ENCODE measurements at regions of chr15 and their contacts with region 1.

Region 1: GRCh38 chr15:71386448-71387236 is 271.4 kb downstream of the THSD4 start:
- DNase-seq: peak; percentile 33
- H3K4me3 ChIP-seq: no peak overlapping the region
- H3K27ac ChIP-seq: peak overlapping the region; percentile 64 to 68
- H3K4me1 ChIP-seq: peaks cover 8% of the 10 kb centered on the region
- H3K27me3 ChIP-seq: no peaks in the 10 kb centered on the region
- CTCF ChIP-seq: peak in 3 of 4 experiments; percentile 70 to 82 (median 80)
- POLR2A ChIP-seq: no peak

Region 2: DNA sequence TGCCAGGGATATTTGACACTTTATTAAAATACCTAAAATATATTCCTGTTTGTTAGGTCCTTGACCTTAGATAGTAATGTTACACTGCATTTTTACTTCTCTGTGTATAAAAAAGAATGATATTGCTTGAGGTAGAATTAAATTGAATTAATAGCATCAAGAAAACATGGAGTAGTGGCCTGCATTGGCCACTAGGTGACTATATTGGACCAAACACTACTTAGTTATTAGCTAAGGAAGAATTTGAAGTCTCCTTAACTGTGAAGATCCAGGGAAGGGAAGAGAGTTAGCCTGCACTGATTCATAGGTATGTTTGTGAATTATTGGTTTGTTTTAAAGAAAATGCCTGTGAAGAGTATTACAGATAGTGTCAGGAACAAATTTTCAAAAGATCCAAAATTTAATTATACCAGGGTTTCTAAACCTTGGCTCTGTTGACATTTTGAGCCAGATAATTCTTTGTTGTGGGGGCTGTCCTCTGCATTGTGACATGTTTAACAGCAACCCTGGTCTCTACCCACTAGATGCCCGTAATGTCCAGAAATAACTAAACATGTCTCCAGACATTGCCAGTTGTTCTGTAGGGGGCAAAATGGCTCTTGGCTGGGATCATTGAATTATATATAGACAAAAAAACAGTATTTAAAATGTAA is 375.0 kb before region 1 on chr15:
- intact Hi-C with region 1: loop called (anchors 10 kb)
- DNase-seq: peak; percentile 46
- H3K4me3 ChIP-seq: no peak overlapping the region
- H3K27ac ChIP-seq: no peak overlapping the region
- H3K4me1 ChIP-seq: no peaks in the 10 kb centered on the region
- H3K27me3 ChIP-seq: no peaks in the 10 kb centered on the region
- CTCF ChIP-seq: peak; percentile 54 to 96 (median 86)
- POLR2A ChIP-seq: no peak

Region 3: DNA sequence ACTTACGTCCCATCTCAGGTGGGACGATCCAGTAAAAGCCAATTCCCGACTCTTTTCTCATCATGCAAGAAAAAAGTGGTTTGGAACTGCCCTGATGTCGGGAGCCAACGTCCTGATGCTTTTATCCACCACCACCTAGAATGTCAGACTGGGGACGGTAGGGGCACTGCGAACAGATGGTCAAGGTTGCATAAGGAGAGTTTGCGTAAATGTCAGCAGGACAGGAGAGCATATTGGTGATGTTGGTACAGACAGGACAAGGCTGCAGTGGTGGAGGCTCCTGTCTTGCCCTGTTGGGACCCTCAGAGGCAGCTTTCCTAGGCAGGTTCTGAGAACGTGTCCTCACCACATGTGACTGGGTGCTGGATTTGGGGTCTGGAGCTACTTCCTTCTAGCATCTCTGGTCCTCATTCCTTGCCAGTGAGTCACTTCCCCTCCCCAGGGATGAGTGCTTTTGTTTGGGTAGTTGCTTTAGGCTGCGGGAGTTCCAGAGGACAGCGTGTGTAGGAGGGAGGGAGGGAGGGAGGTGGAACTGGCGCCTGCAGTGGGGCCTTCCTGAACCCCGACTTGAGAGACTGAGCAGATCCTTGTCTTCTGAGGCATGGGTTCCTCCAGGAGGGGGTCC is 250.4 kb before region 1 on chr15:
- intact Hi-C with region 1: no loop called
- DNase-seq: no peak
- H3K4me3 ChIP-seq: no peak overlapping the region
- H3K27ac ChIP-seq: peak overlapping the region in 1 of 2 donors; percentile 69
- H3K4me1 ChIP-seq: no peaks in the 10 kb centered on the region
- H3K27me3 ChIP-seq: no peaks in the 10 kb centered on the region
- CTCF ChIP-seq: no peak
- POLR2A ChIP-seq: no peak

Region 4: DNA sequence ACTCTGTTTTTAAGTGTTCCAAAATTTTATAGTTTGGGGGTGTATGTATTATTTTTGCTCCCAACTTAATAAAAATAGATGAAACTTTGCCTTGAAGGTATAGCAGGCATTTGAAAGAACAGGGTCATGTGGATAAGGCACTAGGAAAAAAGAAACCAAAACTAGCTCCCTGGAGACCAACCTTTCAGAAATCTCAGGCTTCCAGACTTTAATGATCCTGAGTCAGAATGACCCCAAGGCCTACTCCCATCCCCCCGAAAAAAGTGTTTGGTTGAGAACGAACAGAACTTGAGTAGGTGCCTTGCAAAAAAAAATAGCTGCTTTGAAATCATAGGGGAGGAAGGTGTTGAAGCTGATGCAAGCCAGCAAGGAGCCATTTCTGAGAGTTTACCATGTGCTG is 38.1 kb after region 1 on chr15:
- intact Hi-C with region 1: loop called (anchors 5 kb)
- DNase-seq: no peak
- H3K4me3 ChIP-seq: no peak overlapping the region
- H3K27ac ChIP-seq: no peak overlapping the region
- H3K4me1 ChIP-seq: no peaks in the 10 kb centered on the region
- H3K27me3 ChIP-seq: no peaks in the 10 kb centered on the region
- CTCF ChIP-seq: no peak
- POLR2A ChIP-seq: no peak

Region 5: DNA sequence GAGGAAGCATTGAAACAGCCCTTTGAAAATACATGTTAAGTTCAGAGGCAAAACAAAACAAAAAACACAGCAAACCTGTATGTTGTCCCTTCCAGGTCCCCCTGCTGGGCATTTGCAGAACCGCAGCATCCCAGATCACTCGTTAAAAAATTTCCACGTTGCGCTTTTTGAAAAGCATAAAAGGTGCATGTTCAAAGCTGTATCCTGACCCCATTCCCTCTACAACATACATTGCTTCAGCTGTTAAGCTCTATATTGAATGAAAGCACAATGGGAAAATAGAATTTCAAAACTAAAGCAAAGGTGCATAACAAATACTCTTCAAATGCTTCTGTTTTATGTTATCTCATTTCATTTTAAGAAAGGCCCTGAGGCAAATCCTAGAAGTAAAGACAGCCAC is 56.9 kb after region 1 on chr15:
- intact Hi-C with region 1: loop called (anchors 5 kb)
- DNase-seq: peak; percentile 55
- H3K4me3 ChIP-seq: no peak overlapping the region
- H3K27ac ChIP-seq: peak overlapping the region in 1 of 2 donors; percentile 25
- H3K4me1 ChIP-seq: no peaks in the 10 kb centered on the region
- H3K27me3 ChIP-seq: no peaks in the 10 kb centered on the region
- CTCF ChIP-seq: peak; percentile 85 to 87 (median 85)
- POLR2A ChIP-seq: no peak

Region 6: GRCh38 chr15:71800835-71801745 is 414.4 kb after region 1 on chr15:
- intact Hi-C with region 1: loop called (anchors 5 kb)
- DNase-seq: peak; percentile 55
- H3K4me3 ChIP-seq: no peak overlapping the region
- H3K27ac ChIP-seq: no peak overlapping the region
- H3K4me1 ChIP-seq: no peaks in the 10 kb centered on the region
- H3K27me3 ChIP-seq: no peaks in the 10 kb centered on the region
- CTCF ChIP-seq: peak; percentile 73 to 98 (median 92)
- POLR2A ChIP-seq: no peak